Activated T-helper 1 cell treated with anti-CD3 and anti-CD28 coated beads, Interleukin-12 subunit alpha, Interleukin-12 subunit beta, Interleukin-2, Interleukin-4 antibody, amounts not matched to agents 30 ng/mL and 10 ng/mL and 1 ng/mL, durations not matched to agents 14 hours and 24 hours and 36 hours (primary cell): ENCODE measurements at regions of chr2 and their contacts with region 1.

Region 1: GRCh38 chr2:30421604-30422443 is 25.2 kb upstream of the LCLAT1 start:
- DNase-seq: peak; percentile 11
- H3K4me3 Mint-ChIP-seq: peak overlapping the region; percentile 69
- H3K27ac Mint-ChIP-seq: peak overlapping the region; percentile 92
- H3K4me1 Mint-ChIP-seq: peaks cover 38% of the 10 kb centered on the region
- H3K27me3 Mint-ChIP-seq: no peaks in the 10 kb centered on the region

Region 2: DNA sequence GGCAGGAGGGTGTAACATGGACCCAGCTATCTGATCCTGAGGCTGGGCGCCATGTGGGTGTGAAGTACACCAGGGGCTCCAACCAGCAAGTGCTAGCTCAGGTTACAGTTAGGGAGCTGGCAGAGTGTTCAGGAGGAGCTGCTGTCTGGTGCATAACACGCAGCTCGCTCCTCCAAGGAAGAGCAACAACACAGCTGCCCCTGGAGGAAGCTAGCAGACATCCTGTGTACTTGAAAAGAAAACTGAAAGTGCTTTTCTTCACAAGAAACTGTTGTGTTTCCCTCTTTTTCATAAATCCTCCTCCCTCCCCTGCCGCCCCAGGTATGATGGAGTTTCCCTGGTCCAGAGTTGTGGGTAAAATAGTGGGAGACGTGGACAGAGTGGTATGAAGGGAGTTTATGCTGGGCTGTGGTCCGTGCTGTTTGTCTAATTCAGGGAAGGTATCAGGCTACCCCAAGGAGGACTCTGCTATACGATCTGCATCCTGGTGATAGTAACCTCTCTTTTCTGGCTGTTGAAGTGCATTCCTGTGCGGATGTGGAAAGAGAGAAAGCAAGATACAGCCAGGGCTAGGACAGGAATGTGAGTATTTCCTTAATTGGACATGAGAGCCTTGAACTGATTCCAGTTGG is 196.6 kb before region 1 on chr2:
- intact Hi-C with region 1: loop called (anchors 1 kb)
- DNase-seq: peak; percentile 48
- H3K4me3 Mint-ChIP-seq: peak overlapping the region; percentile 91
- H3K27ac Mint-ChIP-seq: peak overlapping the region; percentile 97
- H3K4me1 Mint-ChIP-seq: peaks cover 77% of the 10 kb centered on the region
- H3K27me3 Mint-ChIP-seq: peaks cover 5% of the 10 kb centered on the region

Region 3: GRCh38 chr2:30266051-30266621 is 155.7 kb before region 1 on chr2:
- intact Hi-C with region 1: loop called (anchors 1 kb)
- DNase-seq: peak; percentile 51
- H3K4me3 Mint-ChIP-seq: peak overlapping the region; percentile 84
- H3K27ac Mint-ChIP-seq: peak overlapping the region; percentile 97
- H3K4me1 Mint-ChIP-seq: peaks cover 82% of the 10 kb centered on the region
- H3K27me3 Mint-ChIP-seq: no peaks in the 10 kb centered on the region

Region 4: DNA sequence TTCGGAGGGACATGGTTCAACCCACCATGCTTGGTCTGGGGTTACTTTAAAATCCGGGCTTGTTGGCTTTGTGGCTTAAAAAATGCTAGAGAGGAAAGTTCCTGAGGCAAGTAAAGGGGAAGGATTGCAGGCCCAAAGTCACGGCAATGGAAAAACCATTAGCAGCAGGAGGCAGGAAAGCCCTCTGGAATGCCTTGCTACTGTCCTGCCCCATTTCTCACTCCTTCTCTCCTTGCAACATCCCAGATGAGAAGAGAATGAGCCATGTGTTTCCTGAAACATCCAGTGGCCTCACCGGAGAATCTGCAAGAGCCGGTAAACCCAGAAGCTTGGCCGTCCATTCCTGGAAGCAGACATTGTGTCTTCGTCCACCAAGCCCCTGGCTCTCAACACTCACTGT is 72.1 kb before region 1 on chr2:
- intact Hi-C with region 1: loop called (anchors 1 kb)
- DNase-seq: no peak
- H3K4me3 Mint-ChIP-seq: no peak overlapping the region
- H3K27ac Mint-ChIP-seq: peak overlapping the region; percentile 63
- H3K4me1 Mint-ChIP-seq: peaks cover 31% of the 10 kb centered on the region
- H3K27me3 Mint-ChIP-seq: no peaks in the 10 kb centered on the region

Region 5: DNA sequence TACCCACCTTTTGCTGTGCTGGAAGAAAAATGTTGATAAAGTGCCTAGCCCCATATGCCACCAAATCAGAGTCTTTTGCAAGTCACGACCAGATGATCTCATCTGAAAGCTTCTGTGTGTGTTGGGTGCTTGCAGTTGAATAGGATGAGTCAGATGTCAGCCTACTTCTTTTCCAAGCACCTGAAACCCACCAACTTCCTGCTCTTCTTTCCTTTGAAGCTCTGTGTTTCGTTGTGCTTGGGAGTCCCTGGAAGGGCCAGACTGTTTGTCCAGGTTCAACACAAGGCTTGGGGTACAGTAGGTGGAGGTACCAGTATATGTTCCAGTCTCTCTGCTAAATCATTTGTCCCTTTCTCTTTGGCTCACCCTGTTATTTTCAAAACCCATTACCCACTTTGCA is 11.6 kb before region 1 on chr2:
- intact Hi-C with region 1: loop called (anchors 1 kb)
- DNase-seq: no peak
- H3K4me3 Mint-ChIP-seq: peak overlapping the region; percentile 45
- H3K27ac Mint-ChIP-seq: peak overlapping the region; percentile 93
- H3K4me1 Mint-ChIP-seq: peaks cover 51% of the 10 kb centered on the region
- H3K27me3 Mint-ChIP-seq: no peaks in the 10 kb centered on the region

Region 6: DNA sequence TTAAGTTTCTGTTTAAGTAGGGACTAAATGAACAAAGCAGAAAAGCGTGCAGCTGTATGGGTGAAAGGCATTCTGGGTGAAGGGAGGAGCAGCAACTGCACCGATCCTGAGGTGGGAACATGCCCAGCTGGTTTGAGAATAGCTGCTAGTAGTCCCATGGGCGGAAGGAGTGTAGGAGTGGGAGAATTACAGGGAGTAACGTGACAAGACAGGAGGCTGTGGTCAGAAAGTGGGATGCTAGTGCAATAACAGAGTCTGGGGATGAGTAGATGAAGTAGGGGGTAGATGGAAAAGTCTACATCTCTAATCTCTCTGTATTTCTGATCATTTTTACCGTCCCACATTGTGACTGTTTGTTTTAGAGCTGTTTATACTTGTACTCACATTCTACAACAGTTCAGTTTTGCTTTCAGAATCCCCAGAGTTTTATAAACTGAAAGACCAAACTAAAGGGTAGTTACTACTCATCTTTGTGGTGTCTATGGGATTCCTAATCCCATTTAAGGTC is 144.1 kb after region 1 on chr2:
- intact Hi-C with region 1: loop called (anchors 5 kb)
- DNase-seq: no peak
- H3K4me3 Mint-ChIP-seq: no peak overlapping the region
- H3K27ac Mint-ChIP-seq: peak overlapping the region; percentile 88
- H3K4me1 Mint-ChIP-seq: peaks cover 15% of the 10 kb centered on the region
- H3K27me3 Mint-ChIP-seq: no peaks in the 10 kb centered on the region